Activated naive CD4-positive, alpha-beta T cell treated with anti-CD3 and anti-CD28 coated beads, Interleukin-2, amount 10 ng/mL, durations not matched to agents 7 days and 5 days (primary cell): ENCODE measurements at regions of chr18 and their contacts with region 1.

Region 1: GRCh38 chr18:79507076-79507545 is 111.4 kb downstream of the NFATC1 start:
- DNase-seq: peak; percentile 66
- H3K4me3 Mint-ChIP-seq: peak overlapping the region; percentile 59
- H3K27ac Mint-ChIP-seq: peak overlapping the region; percentile 90
- H3K4me1 Mint-ChIP-seq: peaks cover 49% of the 10 kb centered on the region
- H3K27me3 Mint-ChIP-seq: no peaks in the 10 kb centered on the region

Region 2: GRCh38 chr18:79517341-79517740 is 10.2 kb after region 1 on chr18:
- CTCF ChIA-PET with region 1: interaction called, 12 read pairs
- DNase-seq: peak; percentile 64
- H3K4me3 Mint-ChIP-seq: peak overlapping the region; percentile 57
- H3K27ac Mint-ChIP-seq: peak overlapping the region; percentile 87
- H3K4me1 Mint-ChIP-seq: peaks cover 65% of the 10 kb centered on the region
- H3K27me3 Mint-ChIP-seq: no peaks in the 10 kb centered on the region

Region 3: GRCh38 chr18:79532328-79533007 is 25.4 kb after region 1 on chr18:
- CTCF ChIA-PET with region 1: no interaction called
- DNase-seq: no peak
- H3K4me3 Mint-ChIP-seq: no peak overlapping the region
- H3K27ac Mint-ChIP-seq: no peak overlapping the region
- H3K4me1 Mint-ChIP-seq: no peaks in the 10 kb centered on the region
- H3K27me3 Mint-ChIP-seq: peaks cover 16% of the 10 kb centered on the region